ENCODE measurements at regions of chr3 and their contacts with region 1.

Region 1: GRCh38 chr3:31132132-31132769 is 237.8 kb upstream of the GADL1 start:
- DNase-seq: no peak

Region 2: GRCh38 chr3:30768703-30769685 is 363.3 kb before region 1 on chr3:
- intact Hi-C with region 1: loop called (anchors 5 kb)
- DNase-seq: no peak